ENCODE measurements at regions of chr12 and their contacts with region 1.

Region 1: DNA sequence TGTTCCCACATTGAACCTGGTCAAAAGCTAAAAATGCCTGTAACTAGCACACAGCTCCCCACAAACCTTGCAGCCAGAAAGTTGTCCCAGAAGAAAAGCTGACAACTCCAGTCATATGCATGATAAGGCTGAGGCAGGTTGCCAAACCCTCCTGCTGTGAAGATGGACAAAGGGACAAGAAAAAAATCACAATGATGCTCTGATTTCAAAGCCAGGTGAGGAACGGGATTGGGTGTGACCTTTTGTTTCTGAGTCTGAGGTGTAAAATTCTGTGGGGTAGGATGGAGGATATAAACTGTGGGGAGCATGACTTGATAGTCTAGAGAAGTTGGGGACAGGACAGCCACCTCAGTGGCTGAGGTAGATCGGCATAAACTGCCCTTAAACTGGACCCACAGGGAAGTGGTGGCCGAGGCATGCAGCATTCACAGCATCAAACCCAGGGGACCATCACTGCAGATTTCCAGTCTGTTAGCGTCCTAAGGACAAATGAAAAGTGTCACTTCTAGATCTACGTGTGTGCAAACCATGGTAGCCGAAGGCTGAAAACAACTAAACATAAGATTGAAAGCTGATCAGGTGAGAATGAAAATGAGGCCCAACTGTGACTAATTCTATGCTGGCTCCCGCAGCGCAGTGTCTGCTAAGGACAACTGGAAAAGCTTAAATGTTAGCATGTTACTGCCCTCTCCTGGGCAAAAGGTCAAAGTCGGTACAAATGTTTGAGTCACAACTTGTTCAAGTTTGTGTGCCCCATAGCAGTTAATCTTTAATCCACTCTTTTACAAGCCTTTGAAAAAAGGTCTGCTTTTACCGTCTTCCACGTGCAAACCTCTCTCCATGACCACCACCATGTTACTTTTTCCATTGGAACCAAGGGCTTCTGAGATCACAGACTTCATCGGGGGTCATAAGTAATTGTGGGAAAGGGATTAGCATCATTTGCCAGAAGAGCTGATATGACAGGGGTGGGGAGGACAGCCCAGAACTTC is 39.8 kb downstream of the GRIN2B start:
- DNase-seq: peak; percentile 80
- H3K4me3 Mint-ChIP-seq: no peak overlapping the region
- H3K27ac Mint-ChIP-seq: no peak overlapping the region
- H3K4me1 Mint-ChIP-seq: no peaks in the 10 kb centered on the region
- H3K27me3 Mint-ChIP-seq: no peaks in the 10 kb centered on the region
- CTCF ChIP-seq: peak; percentile 41

Region 2: GRCh38 chr12:13740150-13740547 is 201.4 kb before region 1 on chr12:
- CTCF ChIA-PET with region 1: interaction called, 32 read pairs
- POLR2A ChIA-PET with region 1: no interaction called
- intact Hi-C with region 1: loop called (anchors 1 kb)
- DNase-seq: no peak
- H3K4me3 Mint-ChIP-seq: no peak overlapping the region
- H3K27ac Mint-ChIP-seq: no peak overlapping the region
- H3K4me1 Mint-ChIP-seq: no peaks in the 10 kb centered on the region
- H3K27me3 Mint-ChIP-seq: peaks cover 28% of the 10 kb centered on the region
- CTCF ChIP-seq: no peak

Region 3: DNA sequence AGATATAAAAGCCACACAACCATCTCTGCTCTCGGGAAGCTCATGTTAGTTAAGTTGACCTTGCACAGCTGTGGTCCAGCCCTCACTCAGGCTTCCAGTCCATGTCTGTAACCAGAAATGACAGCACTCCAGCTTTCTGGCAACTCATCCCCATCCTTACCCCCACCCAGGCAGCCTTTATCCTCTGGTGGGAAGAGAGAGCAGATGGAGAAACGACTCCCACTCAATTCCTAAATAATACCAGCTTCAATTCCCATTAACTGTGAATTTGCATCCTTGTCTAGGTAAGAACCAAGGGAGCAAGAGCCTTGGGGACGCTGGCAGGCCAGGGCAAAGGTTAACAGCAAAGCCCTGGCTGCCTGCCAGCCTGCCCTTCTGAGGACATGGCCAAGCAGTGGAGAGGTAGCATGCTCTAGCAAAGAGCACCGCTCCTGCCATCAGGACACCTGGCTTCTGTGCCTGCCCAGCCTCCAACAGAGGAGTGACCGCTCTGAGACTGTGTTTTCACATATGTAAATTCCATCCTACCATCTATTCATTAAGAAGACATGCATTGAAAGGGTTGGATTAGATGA is 196.4 kb before region 1 on chr12:
- CTCF ChIA-PET with region 1: interaction called, 32 read pairs
- POLR2A ChIA-PET with region 1: no interaction called
- intact Hi-C with region 1: no loop called
- DNase-seq: no peak
- H3K4me3 Mint-ChIP-seq: no peak overlapping the region
- H3K27ac Mint-ChIP-seq: no peak overlapping the region
- H3K4me1 Mint-ChIP-seq: no peaks in the 10 kb centered on the region
- H3K27me3 Mint-ChIP-seq: peaks cover 56% of the 10 kb centered on the region
- CTCF ChIP-seq: no peak